Calu3 (cell line): ENCODE measurements at regions of chr20 and their contacts with region 1.

Region 1: DNA sequence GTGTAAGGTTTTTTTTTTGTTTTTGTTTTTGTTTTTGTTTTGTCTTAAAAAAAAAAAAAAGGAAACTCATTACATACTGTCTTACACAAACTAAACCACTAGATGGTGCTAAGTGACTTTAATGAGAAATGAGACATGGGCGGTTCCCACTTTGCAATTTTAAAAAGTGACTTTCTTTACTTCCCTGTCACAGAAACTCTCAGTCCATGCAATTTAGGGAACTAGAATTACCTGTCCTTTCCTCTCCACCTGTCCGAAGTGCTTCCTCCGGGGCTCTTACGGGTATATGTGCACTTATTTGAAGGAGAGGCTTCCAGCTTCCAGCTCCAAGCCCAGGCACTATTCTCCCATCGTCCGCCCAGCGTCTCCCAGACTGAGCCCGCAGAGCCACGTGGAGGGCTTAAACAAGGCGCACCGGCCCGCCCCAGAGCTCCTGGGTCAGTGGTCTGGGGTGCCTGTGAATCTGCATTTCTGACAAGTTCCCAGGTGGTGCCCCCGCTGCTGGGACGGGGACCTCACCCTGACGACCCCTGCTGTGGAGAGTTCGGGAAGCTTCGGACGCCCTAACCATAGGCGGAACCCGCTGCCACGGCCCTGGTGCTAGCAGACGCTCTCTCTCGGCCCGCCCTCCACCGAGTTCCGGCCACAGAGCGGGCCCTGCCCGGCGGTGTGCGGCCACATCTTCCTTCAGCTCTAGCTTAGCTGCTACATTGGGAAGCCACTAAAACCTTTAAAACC is 26.1 kb downstream of the BFSP1 start:
- DNase-seq: peak; percentile 1
- H3K4me3 Mint-ChIP-seq: peak overlapping the region; percentile 56
- H3K27ac Mint-ChIP-seq: no peak overlapping the region
- H3K4me1 Mint-ChIP-seq: peaks cover 7% of the 10 kb centered on the region
- H3K27me3 Mint-ChIP-seq: no peaks in the 10 kb centered on the region
- CTCF ChIP-seq: no peak

Region 2: GRCh38 chr20:17066902-17067301 is 438.2 kb before region 1 on chr20:
- CTCF ChIA-PET with region 1: no interaction called
- intact Hi-C with region 1: no loop called
- DNase-seq: no peak
- H3K4me3 Mint-ChIP-seq: no peak overlapping the region
- H3K27ac Mint-ChIP-seq: no peak overlapping the region
- H3K4me1 Mint-ChIP-seq: no peaks in the 10 kb centered on the region
- H3K27me3 Mint-ChIP-seq: peaks cover 10% of the 10 kb centered on the region
- CTCF ChIP-seq: no peak

Region 3: DNA sequence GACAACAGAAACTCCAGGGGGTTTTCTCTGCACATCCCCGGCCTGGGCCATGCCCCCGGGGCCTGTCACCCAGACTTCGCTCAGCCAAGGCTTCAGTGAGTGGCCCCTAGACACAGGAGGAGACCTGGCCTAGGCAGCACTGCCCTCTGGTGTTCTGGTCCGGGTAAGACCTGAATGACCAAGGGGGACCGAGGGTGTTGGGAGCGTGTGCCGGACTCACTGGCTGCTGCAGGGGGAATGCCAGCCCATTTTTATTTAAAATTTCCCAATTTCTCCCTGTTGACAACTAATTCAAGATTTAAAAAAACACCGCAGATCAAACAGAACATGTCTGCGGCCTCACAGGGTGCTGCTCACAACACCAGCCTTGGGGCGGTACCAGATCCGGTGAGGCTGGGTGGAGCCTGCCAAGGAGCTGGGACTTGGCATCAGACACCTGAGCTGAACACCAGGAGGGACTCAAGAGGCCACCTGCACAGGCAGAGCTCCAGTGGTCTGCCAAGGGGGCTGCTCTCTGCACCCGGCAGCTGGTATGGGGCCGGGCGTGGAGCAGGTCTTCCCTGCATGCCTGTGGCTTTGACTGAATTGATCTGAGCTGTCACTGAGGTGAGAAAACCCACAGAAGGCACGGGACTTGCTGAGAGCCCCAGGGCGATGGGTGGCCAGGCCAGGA is 112.6 kb after region 1 on chr20:
- CTCF ChIA-PET with region 1: no interaction called
- intact Hi-C with region 1: loop called (anchors 10 kb)
- DNase-seq: peak; percentile 20
- H3K4me3 Mint-ChIP-seq: no peak overlapping the region
- H3K27ac Mint-ChIP-seq: no peak overlapping the region
- H3K4me1 Mint-ChIP-seq: no peaks in the 10 kb centered on the region
- H3K27me3 Mint-ChIP-seq: no peaks in the 10 kb centered on the region
- CTCF ChIP-seq: peak; percentile 14

Region 4: GRCh38 chr20:17995967-17996819 is 491.1 kb after region 1 on chr20:
- CTCF ChIA-PET with region 1: no interaction called
- intact Hi-C with region 1: loop called (anchors 10 kb)
- DNase-seq: peak; percentile 6
- H3K4me3 Mint-ChIP-seq: no peak overlapping the region
- H3K27ac Mint-ChIP-seq: no peak overlapping the region
- H3K4me1 Mint-ChIP-seq: no peaks in the 10 kb centered on the region
- H3K27me3 Mint-ChIP-seq: no peaks in the 10 kb centered on the region
- CTCF ChIP-seq: no peak